ENCODE measurements at regions of chr1 and their contacts with region 1.

Region 1: DNA sequence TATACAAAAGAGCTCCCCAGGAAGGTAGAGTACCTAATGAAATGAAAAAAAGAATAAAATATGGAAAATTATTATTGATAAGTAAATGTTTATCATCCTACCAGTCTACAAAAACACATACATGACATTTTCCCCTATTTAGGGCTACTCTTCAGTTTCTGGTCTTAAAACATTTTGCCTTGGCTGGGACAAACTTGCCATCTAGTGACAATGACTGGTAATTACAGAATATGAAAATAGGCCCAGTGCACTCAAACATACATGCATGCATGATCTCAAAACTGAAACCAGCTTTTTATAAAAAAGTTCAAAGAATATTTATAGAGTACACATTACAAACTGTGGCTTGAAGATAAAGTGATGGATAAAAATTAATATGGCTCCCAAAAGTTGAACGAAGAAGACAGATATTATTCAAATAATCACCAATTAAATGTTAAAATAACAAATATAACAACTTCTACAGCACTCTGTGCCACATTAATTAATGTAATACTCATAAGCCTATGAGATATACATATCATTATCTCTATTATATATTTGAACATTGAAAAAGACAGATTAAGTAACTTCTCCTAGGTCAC is 10.5 kb upstream of the RNPC3 start:
- DNase-seq: peak; percentile 19
- ATAC-seq: peak; percentile 31
- H3K4me3 Mint-ChIP-seq: peak overlapping the region; percentile 16
- H3K27ac Mint-ChIP-seq: peak overlapping the region; percentile 95
- H3K4me1 Mint-ChIP-seq: peaks cover 38% of the 10 kb centered on the region
- H3K27me3 Mint-ChIP-seq: no peaks in the 10 kb centered on the region
- CTCF ChIP-seq: peak; percentile 71

Region 2: DNA sequence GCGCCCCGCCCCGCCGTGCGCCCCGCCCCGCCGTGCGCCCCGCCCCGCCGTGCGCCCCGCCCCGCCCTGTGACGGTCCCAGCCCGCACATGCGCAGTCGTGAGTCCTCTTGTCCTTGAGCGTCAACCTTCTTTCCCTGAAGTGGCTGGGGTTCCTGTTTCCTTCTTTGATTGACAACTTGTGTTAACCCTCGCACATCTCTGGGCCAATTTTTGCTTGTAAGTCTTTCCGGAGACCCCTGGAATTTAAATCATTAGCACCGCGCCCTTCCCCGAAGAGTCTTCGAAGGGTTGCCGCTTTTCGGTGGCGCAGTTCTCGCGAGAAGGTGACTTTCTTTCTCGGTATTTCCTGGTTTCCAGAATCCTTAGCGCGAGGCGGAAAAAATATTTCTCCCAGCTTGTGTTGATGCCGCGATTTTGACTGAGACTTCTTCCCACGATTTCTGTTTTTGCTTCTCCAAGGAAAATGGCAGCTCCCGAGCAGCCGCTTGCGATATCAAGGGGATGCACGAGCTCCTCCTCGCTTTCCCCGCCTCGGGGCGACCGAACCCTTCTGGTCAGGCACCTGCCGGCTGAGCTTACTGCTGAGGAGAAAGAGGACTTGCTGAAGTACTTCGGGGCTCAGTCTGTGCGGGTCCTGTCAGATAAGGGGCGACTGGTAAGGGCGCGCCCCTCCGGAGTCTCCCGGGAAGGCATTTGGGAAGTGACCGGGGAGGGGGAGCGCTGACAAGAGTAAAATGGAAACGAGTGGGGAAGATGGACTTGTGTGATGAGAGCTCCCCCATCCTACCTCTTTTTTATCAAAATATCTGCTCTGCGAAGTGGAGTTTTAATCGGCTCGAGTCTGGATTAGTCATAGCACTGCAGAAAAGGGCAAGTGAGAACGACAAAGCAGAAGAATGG is 10.8 kb after region 1 on chr1 and contains the start of gene RNPC3:
- CTCF ChIA-PET with region 1: interaction called, 23 read pairs
- POLR2A ChIA-PET with region 1: interaction called, 3 read pairs
- intact Hi-C with region 1: no loop called
- DNase-seq: peak; percentile 87
- ATAC-seq: peak; percentile 75
- H3K4me3 Mint-ChIP-seq: peak within 1 kb of the TSS; percentile 96
- H3K27ac Mint-ChIP-seq: peak within 1 kb of the TSS; percentile 99
- H3K4me1 Mint-ChIP-seq: peaks cover 53% of the 10 kb centered on the region
- H3K27me3 Mint-ChIP-seq: no peaks in the 10 kb centered on the region
- CTCF ChIP-seq: no peak
- total RNA-seq, gene RNPC3: 22.8 to 23.2 TPM